Natural killer cell (primary cell): ENCODE measurements at regions of chr11 and their contacts with region 1.

Region 1: GRCh38 chr11:78022397-78023396 is at the start of gene KCTD14:
- DNase-seq: no peak
- ATAC-seq: no peak
- H3K4me3 ChIP-seq: no peak within 1 kb of the TSS
- H3K4me3 Mint-ChIP-seq: no peak within 1 kb of the TSS
- H3K27ac ChIP-seq: no peak within 1 kb of the TSS
- H3K27ac Mint-ChIP-seq: no peak within 1 kb of the TSS
- H3K4me1 ChIP-seq: peaks cover 4% of the 10 kb centered on the region
- H3K4me1 Mint-ChIP-seq: peaks cover 7 to 9% of the 10 kb centered on the region in 2 donors
- H3K27me3 ChIP-seq: no peaks in the 10 kb centered on the region
- H3K27me3 Mint-ChIP-seq: peaks cover 22 to 23% of the 10 kb centered on the region in 2 donors
- CTCF ChIP-seq: no peak
- total RNA-seq, gene KCTD14: 0.28 to 0.32 TPM in 2 of 3 donors, not detected in the other

Region 2: DNA sequence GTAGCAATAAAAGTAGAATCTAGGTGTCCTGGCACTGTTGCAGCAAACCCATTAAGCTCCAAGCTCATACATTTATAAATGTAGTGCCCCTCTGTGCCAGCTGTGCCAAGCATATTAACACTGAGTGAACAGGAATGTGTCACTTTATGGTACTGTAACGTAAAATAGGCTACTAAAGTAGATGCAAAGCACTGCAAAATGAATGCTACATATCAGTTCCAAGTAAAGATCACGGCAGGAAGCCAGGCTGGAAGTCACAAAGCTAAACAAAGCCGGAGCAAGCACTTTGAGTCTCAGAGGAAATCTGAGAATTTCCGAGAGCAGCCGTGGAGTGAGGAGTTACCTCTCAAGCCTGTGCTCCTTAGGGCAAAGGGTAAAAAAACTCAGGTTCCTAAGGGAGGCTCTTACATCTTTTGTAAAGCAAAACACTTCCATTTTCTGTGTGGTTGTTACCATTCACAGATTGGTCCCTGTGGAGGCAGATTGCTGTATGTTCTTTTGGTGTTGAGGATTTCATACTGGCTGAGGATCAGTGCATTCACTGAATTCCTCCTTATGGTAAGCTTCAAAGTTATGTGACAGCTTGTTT is 1902.1 kb before region 1 on chr11:
- intact Hi-C with region 1: no loop called
- DNase-seq: no peak
- ATAC-seq: no peak
- H3K4me3 ChIP-seq: no peak overlapping the region
- H3K4me3 Mint-ChIP-seq: no peak overlapping the region
- H3K27ac ChIP-seq: no peak overlapping the region
- H3K27ac Mint-ChIP-seq: no peak overlapping the region
- H3K4me1 ChIP-seq: no peaks in the 10 kb centered on the region
- H3K4me1 Mint-ChIP-seq: no peaks in the 10 kb centered on the region
- H3K27me3 ChIP-seq: no peaks in the 10 kb centered on the region
- H3K27me3 Mint-ChIP-seq: no peaks in the 10 kb centered on the region
- CTCF ChIP-seq: no peak

Region 3: DNA sequence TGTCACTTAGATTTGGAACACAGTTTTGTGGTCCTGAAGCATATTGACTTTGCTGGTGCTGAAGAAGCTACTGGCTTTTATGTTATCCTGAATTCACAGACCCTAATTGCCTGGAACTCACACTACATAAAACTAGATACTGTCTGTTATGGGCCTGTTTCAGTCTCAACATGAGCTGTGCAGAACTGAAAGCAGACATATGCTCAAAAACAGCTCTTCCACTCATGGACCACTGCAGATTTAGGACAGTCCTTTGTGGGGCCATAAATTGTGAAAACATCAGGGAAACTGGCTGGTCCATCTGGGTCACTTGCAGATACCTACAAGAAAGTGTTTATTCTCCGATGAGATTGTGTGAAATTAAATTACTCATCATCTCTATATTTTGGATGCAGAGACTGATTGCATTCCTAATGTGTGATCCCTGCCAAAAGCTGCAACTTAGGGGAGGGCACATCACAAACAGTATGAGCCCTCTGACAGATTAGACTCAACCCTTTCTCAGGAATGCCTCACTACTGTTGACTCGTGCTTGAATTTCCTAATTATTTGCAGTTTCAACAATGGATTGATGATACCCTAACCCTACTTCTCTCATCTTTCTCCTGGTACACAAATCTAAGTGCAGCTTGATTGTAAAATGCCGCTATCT is 374.9 kb before region 1 on chr11:
- intact Hi-C with region 1: loop called (anchors 5 kb)
- DNase-seq: no peak
- ATAC-seq: no peak
- H3K4me3 ChIP-seq: no peak overlapping the region
- H3K4me3 Mint-ChIP-seq: no peak overlapping the region
- H3K27ac ChIP-seq: no peak overlapping the region
- H3K27ac Mint-ChIP-seq: no peak overlapping the region
- H3K4me1 ChIP-seq: no peaks in the 10 kb centered on the region
- H3K4me1 Mint-ChIP-seq: no peaks in the 10 kb centered on the region
- H3K27me3 ChIP-seq: no peaks in the 10 kb centered on the region
- H3K27me3 Mint-ChIP-seq: peaks cover 0 to 7% of the 10 kb centered on the region in 2 donors
- CTCF ChIP-seq: no peak

Region 4: DNA sequence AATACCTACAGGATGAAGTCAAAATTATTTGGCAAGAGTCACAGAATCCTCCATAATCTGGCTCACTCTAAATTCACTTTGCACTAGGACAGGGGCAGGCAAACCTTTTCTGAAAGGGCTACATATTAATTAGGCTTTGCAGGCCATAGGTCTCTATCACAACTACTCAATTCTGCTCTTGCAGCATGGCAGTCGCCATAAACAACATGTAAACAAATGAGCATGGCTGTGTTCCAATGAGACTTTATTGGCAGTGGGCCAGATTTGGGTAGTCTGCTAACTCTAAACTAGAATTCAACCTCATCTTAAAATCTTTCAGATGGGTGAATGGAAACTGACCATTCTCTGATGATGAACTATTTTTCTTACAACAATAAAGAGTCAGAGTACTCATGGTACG is 46.8 kb after region 1 on chr11:
- intact Hi-C with region 1: no loop called
- DNase-seq: no peak
- ATAC-seq: no peak
- H3K4me3 ChIP-seq: no peak overlapping the region
- H3K4me3 Mint-ChIP-seq: no peak overlapping the region
- H3K27ac ChIP-seq: no peak overlapping the region
- H3K27ac Mint-ChIP-seq: no peak overlapping the region
- H3K4me1 ChIP-seq: no peaks in the 10 kb centered on the region
- H3K4me1 Mint-ChIP-seq: peaks cover 8 to 20% of the 10 kb centered on the region in 2 donors
- H3K27me3 ChIP-seq: no peaks in the 10 kb centered on the region
- H3K27me3 Mint-ChIP-seq: no peaks in the 10 kb centered on the region
- CTCF ChIP-seq: no peak